ENCODE measurements at regions of chr3 and their contacts with region 1.

Region 1: GRCh38 chr3:10344147-10344943 is 23.4 kb upstream of the SEC13 start:
- DNase-seq: peak in 1 of 2 donors; percentile 77
- ATAC-seq: no peak
- H3K4me3 ChIP-seq: no peak overlapping the region
- H3K27ac ChIP-seq: no peak overlapping the region
- H3K4me1 ChIP-seq: no peaks in the 10 kb centered on the region
- H3K27me3 ChIP-seq: no peaks in the 10 kb centered on the region

Region 2: GRCh38 chr3:10251006-10251405 is 93.3 kb before region 1 on chr3:
- intact Hi-C with region 1: no loop called
- DNase-seq: no peak
- ATAC-seq: no peak
- H3K4me3 ChIP-seq: no peak overlapping the region
- H3K27ac ChIP-seq: no peak overlapping the region
- H3K4me1 ChIP-seq: no peaks in the 10 kb centered on the region
- H3K27me3 ChIP-seq: no peaks in the 10 kb centered on the region

Region 3: GRCh38 chr3:10628891-10629670 is 284.7 kb after region 1 on chr3:
- intact Hi-C with region 1: no loop called
- DNase-seq: no peak
- ATAC-seq: no peak
- H3K4me3 ChIP-seq: no peak overlapping the region
- H3K27ac ChIP-seq: no peak overlapping the region
- H3K4me1 ChIP-seq: no peaks in the 10 kb centered on the region
- H3K27me3 ChIP-seq: no peaks in the 10 kb centered on the region

Region 4: DNA sequence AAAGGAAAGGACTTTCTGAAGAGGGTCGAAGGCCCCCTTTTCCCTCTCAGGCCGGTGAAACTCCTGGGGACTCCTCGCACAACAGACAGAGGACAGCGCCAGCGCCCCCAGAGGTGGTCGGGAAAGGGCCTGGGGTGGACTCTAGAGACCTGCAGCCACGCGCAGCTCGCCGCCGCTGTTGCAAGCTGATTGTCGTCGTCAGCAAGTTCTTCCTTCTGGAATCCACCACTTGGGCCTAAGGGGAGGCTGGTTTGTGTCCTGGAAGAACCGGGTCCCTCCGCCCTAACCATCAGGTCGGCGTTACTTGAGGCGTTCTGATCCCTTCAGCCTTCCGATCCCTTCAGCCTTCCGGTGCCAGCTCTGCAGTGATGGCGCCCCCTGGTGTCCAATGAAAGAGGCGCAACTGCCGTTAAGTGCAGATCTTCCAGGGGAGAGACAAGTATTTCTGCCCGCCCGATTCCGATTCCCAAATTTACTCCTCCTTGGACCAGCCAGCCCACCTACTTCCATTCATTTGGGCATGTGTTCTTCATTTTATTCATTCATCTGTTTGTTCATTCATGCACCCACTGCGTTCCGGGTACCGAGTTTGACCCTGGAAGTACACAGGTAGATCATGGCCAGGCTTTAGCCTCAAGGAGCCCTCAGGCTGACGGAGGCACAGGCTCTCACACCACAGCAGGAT is 394.5 kb after region 1 on chr3:
- intact Hi-C with region 1: loop called (anchors 2 kb)
- DNase-seq: peak; percentile 73 to 92
- ATAC-seq: peak; percentile 72
- H3K4me3 ChIP-seq: no peak overlapping the region
- H3K27ac ChIP-seq: no peak overlapping the region
- H3K4me1 ChIP-seq: no peaks in the 10 kb centered on the region
- H3K27me3 ChIP-seq: peaks cover 0 to 4% of the 10 kb centered on the region in 2 donors